Left ventricle myocardium superior (tissue), 1 donor: ENCODE measurements at regions of chr12 and their contacts with region 1.

Region 1: GRCh38 chr12:70719672-70720420 is 82.6 kb upstream of the PTPRB start:
- DNase-seq: peak; percentile 58
- ATAC-seq: peak; percentile 72

Region 2: DNA sequence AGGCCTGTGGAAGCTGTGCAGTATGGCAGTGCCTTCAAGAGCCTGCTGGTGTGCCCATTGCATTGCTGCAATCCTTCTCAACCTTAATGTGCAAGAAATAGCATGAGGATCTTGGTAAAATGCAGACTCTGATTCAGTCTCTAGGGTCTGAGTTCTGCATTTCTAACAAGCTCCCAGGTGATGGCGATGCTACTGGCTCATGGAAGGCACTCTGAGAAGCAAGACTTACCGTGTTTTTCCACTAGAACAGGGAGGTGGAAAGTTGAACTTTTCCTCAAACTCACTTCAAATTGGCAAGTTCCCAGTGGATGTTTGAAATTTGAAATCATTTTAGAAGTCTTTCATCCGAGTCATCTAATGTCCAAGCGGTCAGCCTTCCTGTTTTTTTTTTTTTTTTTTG is 839.3 kb before region 1 on chr12:
- intact Hi-C with region 1: loop called (anchors 5 kb)
- DNase-seq: no peak
- ATAC-seq: no peak

Region 3: DNA sequence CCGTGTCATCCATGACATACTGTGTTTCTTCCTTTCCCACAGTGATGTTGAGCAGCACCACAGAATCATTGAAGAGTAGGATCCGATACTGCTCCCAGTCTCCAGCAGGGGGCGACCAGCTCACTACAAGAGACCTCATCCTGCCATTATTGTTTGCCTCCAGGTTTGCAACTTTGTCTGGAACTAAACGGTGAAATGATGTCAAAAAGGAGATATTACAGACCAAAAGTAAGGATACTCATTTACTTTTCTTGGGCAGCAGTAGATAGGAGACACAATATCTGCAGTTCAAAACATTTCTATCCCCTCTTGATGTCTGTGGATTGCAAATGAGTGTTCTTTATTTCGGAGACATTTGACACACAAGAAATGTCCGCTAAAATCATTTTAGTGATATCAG is 129.8 kb before region 1 on chr12:
- intact Hi-C with region 1: loop called (anchors 5 kb)
- DNase-seq: peak; percentile 78
- ATAC-seq: peak; percentile 77

Region 4: DNA sequence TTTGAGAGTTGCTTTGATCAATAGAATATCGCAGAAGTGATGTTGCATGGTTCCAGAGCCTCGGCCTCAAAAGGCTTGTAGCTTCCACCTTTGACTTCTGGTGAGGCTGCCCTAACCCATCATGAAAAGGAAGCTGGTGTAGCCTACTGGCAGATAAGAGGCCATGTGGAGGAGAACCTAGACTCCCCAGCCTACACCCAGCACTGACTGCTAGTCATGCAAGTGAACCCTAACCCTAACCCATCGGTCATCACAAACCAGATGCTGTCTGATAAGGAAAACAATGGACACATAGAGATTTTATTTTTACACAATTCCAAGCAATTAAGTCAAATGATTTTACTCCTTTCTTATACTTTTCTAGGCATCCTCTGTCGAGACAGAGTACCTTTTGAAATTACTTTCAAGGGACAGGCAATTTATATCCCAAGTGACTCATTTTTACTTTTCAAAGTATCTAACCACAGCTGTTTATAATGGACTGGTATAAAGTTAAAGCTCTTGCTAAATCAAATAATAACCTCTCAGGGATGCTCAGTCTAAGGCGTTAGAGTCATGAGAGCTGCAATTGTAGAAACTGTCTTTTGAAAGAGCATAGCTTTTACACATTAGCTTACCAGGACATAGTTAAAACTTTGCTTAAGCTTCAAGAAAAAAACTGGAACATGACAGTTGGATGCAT is 100.2 kb before region 1 on chr12:
- intact Hi-C with region 1: no loop called
- DNase-seq: no peak
- ATAC-seq: no peak

Region 5: DNA sequence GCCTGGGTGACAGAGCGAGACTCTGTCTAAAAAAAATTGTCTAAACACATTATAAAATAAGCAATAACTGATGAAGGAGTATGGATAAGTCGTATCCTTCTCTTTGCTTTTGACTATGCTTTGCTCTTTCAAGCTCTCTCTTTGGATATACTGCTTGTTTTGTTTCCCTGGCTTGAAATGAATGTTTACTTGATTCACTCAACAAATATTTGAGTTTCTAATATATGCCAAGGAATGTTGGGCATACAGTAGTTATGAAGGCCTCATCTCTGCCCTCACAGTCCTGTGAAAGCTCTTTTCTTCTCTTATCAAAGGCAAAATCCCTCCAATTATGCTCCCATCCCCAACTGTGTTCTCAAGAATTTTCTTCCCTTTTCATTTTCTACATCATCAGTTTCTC is 77.1 kb after region 1 on chr12:
- intact Hi-C with region 1: no loop called
- DNase-seq: no peak
- ATAC-seq: no peak